Posterior vena cava (tissue), 2 donors: ENCODE measurements at regions of chr20 and their contacts with region 1.

Region 1: GRCh38 chr20:41509316-41510200 is 108.6 kb downstream of the CHD6 start:
- DNase-seq: no peak

Region 2: DNA sequence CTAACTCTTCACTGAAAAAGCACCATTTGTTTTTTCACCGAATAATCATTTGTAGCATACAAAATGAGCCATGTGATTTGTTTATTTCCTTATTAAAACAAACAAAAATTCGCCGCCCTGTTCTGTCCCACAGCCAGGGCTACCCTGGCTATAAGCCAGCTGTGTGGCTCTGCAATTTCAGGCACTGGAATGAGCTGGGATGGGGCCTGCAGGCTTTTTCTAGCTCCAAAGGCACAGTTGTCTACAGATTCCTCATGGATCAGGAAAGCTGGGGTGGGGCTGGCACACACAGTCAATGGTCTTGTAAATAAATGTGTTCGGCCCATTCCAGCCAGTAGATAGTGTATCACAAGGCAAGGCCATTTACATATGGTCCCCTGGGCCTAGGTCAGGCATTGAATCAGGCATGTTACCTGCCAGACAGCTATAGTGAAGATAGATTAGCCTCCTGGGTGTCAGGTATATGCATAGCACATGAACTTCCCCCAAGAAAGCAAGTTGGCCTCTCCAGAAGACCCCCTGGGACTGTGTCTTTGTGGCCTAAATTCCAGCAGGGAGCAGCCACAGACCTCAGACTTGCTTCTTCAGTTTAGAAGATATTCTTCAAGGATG is 1429.4 kb before region 1 on chr20:
- intact Hi-C with region 1: no loop called
- DNase-seq: no peak

Region 3: DNA sequence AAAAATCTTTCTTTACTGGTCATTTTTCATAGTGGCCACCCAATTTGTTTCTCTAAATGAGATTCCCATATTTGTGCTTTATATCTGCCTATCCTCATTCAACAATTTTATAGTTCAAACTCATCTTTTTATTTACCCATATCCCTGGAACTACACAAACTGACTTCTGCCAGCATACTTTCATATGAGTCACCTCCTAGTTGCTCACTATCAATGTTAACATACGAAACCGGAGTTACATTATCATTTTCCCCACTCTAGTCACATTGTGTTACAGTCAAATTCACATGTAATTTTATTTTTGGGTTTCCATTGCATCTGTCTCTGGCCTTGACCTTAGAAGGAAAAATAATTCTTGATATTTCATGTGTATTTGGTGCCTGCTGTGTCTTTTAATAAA is 1319.9 kb before region 1 on chr20:
- intact Hi-C with region 1: loop called in 1 of 2 experiments (anchors 10 kb)
- DNase-seq: no peak

Region 4: DNA sequence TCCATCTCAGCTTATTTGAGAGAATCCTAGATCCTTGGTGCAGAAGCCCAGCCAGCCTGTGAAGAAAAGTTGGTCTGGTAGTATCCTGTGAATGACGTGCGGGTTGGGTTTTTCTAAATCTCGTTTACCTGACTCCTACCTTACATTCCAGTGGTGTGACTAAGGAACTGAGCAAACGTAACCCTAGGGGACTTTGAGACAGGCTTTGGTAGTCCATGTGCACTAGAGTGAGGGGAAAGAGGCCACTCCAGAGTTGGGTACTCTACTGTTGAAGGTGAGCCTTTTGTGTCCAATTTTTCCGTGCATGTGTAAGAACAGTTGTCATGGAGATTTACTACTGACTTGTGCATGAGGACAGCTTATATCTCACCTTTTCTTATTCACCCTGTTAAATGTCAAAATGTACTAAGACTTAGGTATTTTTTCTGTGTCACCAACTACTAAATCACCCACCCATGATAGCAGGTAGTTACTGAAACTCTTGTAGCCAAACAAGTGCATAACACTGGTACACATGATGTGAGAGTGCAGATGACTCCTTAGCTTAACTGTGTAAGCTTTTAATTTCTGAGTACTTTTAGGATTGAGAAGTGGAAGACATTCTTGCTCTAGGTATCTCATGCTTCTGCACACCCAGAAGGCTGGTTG is 398.5 kb before region 1 on chr20:
- intact Hi-C with region 1: no loop called
- DNase-seq: no peak

Region 5: GRCh38 chr20:41476013-41476752 is 33.4 kb before region 1 on chr20:
- intact Hi-C with region 1: no loop called
- DNase-seq: no peak